ENCODE measurements at regions of chr11 and their contacts with region 1.

Region 1: GRCh38 chr11:22666688-22667439 is 453 bp downstream of the GAS2 start:
- DNase-seq: peak; percentile 63 to 73
- H3K4me3 ChIP-seq: peak overlapping the region; percentile 63
- H3K4me3 Mint-ChIP-seq: peak overlapping the region; percentile 87
- H3K27ac Mint-ChIP-seq: peak overlapping the region; percentile 58
- H3K4me1 ChIP-seq: no peaks in the 10 kb centered on the region; the same call in 1 of the 2 replicates
- H3K4me1 Mint-ChIP-seq: peaks cover 12% of the 10 kb centered on the region
- H3K27me3 ChIP-seq: no peaks in the 10 kb centered on the region
- H3K27me3 Mint-ChIP-seq: no peaks in the 10 kb centered on the region
- CTCF ChIP-seq: no peak

Region 2: GRCh38 chr11:22331771-22332170 is 335.1 kb before region 1 on chr11:
- CTCF ChIA-PET with region 1: no interaction called
- POLR2A ChIA-PET with region 1: no interaction called
- intact Hi-C with region 1: loop called (anchors 5 kb)
- DNase-seq: no peak
- H3K4me3 ChIP-seq: no peak overlapping the region
- H3K4me3 Mint-ChIP-seq: no peak overlapping the region
- H3K27ac Mint-ChIP-seq: no peak overlapping the region
- H3K4me1 ChIP-seq: no peaks in the 10 kb centered on the region
- H3K4me1 Mint-ChIP-seq: no peaks in the 10 kb centered on the region
- H3K27me3 ChIP-seq: no peaks in the 10 kb centered on the region
- H3K27me3 Mint-ChIP-seq: peaks cover 12% of the 10 kb centered on the region
- CTCF ChIP-seq: peak in 1 of 2 experiments; percentile 15

Region 3: GRCh38 chr11:22625448-22626287 is 41.2 kb before region 1 on chr11 and contains the start of gene FANCF:
- CTCF ChIA-PET with region 1: interaction called, 3 read pairs
- POLR2A ChIA-PET with region 1: no interaction called
- intact Hi-C with region 1: loop called (anchors 2 kb)
- DNase-seq: peak; percentile 95 to 98
- H3K4me3 ChIP-seq: peak within 1 kb of the TSS; percentile 88
- H3K4me3 Mint-ChIP-seq: peak within 1 kb of the TSS; percentile 97
- H3K27ac Mint-ChIP-seq: peak within 1 kb of the TSS; percentile 99
- H3K4me1 ChIP-seq: peaks cover 7% of the 10 kb centered on the region; the same call in 1 of the 2 replicates
- H3K4me1 Mint-ChIP-seq: no peaks in the 10 kb centered on the region
- H3K27me3 ChIP-seq: no peaks in the 10 kb centered on the region
- H3K27me3 Mint-ChIP-seq: no peaks in the 10 kb centered on the region
- CTCF ChIP-seq: no peak
- total RNA-seq, gene FANCF: 13.8 and 15.4 TPM in 2 replicates

Region 4: DNA sequence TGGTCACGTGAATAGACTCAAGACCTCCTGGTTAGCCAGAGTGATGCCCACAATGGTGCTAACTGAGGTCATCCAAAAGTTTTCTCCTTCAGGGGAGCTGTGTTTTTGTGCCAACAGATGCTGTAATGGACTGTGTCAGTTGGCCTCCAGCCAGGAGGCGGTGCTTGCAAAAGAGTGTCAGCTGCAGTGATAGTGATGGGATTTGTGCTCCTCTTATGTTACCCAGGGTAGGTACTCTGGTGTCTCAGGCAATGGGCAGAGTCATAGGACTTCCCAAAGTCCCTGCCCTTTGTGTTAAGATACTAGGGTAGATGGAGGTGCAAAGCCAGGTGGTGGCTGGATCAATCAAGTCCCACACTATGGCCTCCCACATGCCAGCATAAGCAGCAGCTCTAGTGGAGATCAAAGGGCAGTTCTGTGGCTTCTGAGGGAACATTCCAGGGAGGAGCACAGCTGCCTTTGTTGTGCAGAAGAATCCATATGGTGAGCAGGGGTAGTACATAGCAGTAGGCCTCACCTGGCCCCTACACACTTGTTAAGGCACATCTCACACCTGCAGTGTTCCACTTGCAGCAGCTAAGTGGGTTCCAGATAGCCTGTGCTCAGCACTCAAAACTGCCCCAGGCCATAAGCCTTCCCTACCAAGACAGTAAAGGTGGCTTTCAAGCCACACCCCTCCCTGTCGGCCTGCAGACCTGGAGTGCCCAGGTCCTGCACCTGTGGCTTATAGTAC is 31.8 kb before region 1 on chr11:
- CTCF ChIA-PET with region 1: no interaction called
- POLR2A ChIA-PET with region 1: no interaction called
- intact Hi-C with region 1: loop called (anchors 2 kb)
- DNase-seq: peak; percentile 56 to 78
- H3K4me3 ChIP-seq: no peak overlapping the region
- H3K4me3 Mint-ChIP-seq: peak overlapping the region; percentile 37
- H3K27ac Mint-ChIP-seq: peak overlapping the region; percentile 71
- H3K4me1 ChIP-seq: peaks cover 18% of the 10 kb centered on the region
- H3K4me1 Mint-ChIP-seq: peaks cover 10% of the 10 kb centered on the region
- H3K27me3 ChIP-seq: no peaks in the 10 kb centered on the region
- H3K27me3 Mint-ChIP-seq: no peaks in the 10 kb centered on the region
- CTCF ChIP-seq: no peak

Region 5: GRCh38 chr11:22730319-22730718 is 63.5 kb after region 1 on chr11:
- CTCF ChIA-PET with region 1: interaction called, 4 read pairs
- POLR2A ChIA-PET with region 1: interaction called, 4 read pairs
- intact Hi-C with region 1: loop called (anchors 1 kb)
- DNase-seq: peak in 1 of 2 experiments; percentile 44
- H3K4me3 ChIP-seq: no peak overlapping the region
- H3K4me3 Mint-ChIP-seq: no peak overlapping the region
- H3K27ac Mint-ChIP-seq: no peak overlapping the region
- H3K4me1 ChIP-seq: no peaks in the 10 kb centered on the region; the same call in 1 of the 2 replicates
- H3K4me1 Mint-ChIP-seq: peaks cover 8% of the 10 kb centered on the region
- H3K27me3 ChIP-seq: no peaks in the 10 kb centered on the region
- H3K27me3 Mint-ChIP-seq: no peaks in the 10 kb centered on the region
- CTCF ChIP-seq: peak; percentile 50 to 61

Region 6: GRCh38 chr11:22778642-22779041 is 111.8 kb after region 1 on chr11:
- CTCF ChIA-PET with region 1: no interaction called
- POLR2A ChIA-PET with region 1: no interaction called
- intact Hi-C with region 1: loop called (anchors 1 kb)
- DNase-seq: no peak
- H3K4me3 ChIP-seq: no peak overlapping the region
- H3K4me3 Mint-ChIP-seq: no peak overlapping the region
- H3K27ac Mint-ChIP-seq: no peak overlapping the region
- H3K4me1 ChIP-seq: no peaks in the 10 kb centered on the region
- H3K4me1 Mint-ChIP-seq: no peaks in the 10 kb centered on the region
- H3K27me3 ChIP-seq: no peaks in the 10 kb centered on the region
- H3K27me3 Mint-ChIP-seq: peaks cover 5% of the 10 kb centered on the region
- CTCF ChIP-seq: no peak

Region 7: GRCh38 chr11:22829231-22830081 is 162.6 kb after region 1 on chr11 and contains the start of gene SVIP:
- CTCF ChIA-PET with region 1: interaction called, 3 read pairs
- POLR2A ChIA-PET with region 1: no interaction called
- intact Hi-C with region 1: loop called (anchors 2 kb)
- DNase-seq: peak; percentile 96 to 97
- H3K4me3 ChIP-seq: peak within 1 kb of the TSS; percentile 92
- H3K4me3 Mint-ChIP-seq: peak within 1 kb of the TSS; percentile 87
- H3K27ac Mint-ChIP-seq: peak within 1 kb of the TSS; percentile 66
- H3K4me1 ChIP-seq: peaks cover 14% of the 10 kb centered on the region
- H3K4me1 Mint-ChIP-seq: peaks cover 15% of the 10 kb centered on the region
- H3K27me3 ChIP-seq: no peaks in the 10 kb centered on the region
- H3K27me3 Mint-ChIP-seq: no peaks in the 10 kb centered on the region
- CTCF ChIP-seq: peak; percentile 46 to 93
- total RNA-seq, gene SVIP: 19.6 and 21.0 TPM in 2 replicates

Measured in Caco-2 (cell line).